Gastrocnemius medialis (tissue), 4 donors: ENCODE measurements at regions of chrX and their contacts with region 1.

Region 1: DNA sequence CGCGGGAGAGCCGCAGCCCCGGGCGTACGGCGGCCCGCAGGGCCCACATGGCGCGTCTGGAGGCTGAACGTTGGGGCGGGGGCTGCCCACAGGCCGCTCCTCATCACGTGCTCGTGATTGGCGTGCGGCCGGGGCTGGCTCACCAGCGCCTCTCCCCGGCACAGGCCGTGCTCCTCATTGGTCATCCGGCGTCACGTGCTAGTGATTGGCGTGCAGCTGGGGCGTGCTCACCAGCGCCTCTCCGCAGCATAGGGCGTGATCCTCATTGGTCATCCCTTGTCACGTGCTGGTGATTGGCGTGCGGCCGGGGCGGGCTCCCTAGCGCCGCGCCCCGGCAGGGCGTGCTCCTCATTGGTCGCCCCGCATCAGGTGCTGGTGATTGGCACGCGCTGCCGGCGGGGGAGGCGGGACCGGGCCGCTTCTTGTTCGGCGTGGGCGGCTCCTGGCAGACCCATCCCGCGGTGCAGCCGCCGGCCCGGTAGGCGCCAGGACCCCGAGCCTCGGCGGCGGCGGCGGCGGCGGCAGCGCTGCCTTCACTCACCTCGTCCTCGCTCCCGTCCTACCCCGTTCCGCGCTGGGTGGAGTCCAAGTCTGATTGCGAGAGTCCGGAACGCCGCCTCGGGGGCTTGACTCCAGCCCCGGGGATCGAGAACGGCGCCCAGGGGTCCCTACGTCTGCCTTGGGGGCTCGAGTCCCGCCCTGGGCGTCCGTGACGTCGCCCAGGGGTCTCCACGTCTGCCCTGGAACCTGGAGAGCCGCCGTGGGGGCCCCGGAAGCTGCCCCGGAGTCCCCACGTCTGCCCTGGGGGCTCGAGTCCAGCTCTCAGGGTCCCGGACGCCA is at the start of gene GTPBP6:
- DNase-seq: peak; percentile 100
- ATAC-seq: peak; percentile 75 to 83
- H3K4me3 ChIP-seq: peak within 1 kb of the TSS; percentile 88 to 94 (median 90)
- H3K27ac ChIP-seq: peak within 1 kb of the TSS; percentile 91 to 99 (median 99)
- H3K4me1 ChIP-seq: peaks cover 9 to 22% of the 10 kb centered on the region in 2 donors
- H3K27me3 ChIP-seq: peaks cover 0 to under 1% (median 0%) of the 10 kb centered on the region in 3 donors
- CTCF ChIP-seq: peak in 3 of 5 experiments; percentile 17 to 26 (median 21)
- POLR2A ChIP-seq: peak; percentile 65 to 82
- total RNA-seq, gene GTPBP6: 40.1 to 79.4 (median 46.9) TPM

Region 2: DNA sequence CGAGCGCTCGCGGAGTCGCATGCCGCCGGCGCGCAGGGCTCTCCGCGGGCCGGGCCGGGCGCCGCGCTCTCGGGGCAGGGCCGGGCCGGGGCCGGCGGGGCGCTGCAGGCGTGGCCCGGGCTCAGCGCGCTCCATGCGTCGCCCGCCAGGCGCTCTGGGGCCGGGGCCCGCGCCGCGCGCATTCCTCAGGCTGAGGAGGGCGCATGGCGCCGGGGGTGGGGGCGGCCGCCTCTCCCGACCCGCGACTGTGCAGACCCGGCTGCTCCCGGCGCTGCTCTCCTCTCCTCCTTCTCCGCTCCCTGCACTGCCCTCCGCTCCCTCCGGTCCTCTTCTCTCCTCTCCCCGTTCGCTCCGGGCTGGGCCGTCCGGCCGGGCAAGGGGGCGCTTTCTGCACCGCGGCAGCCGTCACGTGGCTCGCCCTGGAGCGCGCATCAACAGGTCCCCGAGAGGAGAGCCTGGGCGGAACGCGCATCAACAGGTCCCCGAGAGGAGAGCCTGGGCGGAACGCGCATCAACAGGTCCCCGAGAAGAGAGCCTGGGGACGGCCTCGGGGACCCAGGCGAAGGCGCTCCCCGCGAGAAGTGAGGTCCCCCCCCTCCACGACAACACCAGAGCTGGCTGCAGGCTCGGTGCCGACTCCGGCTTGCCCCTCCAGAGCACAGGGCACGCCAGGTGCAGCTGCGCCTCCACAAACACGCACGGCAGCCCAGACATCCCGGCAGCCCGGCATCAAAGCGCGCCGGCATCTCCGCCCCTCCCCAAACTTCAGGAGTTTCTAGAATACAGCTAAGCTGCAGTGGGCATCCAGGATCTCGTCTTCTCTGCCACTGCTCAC is 54.9 kb after region 1 on chrX:
- in situ Hi-C with region 1: no loop called
- intact Hi-C with region 1: loop called (anchors 2 kb)
- DNase-seq: peak; percentile 39 to 44
- ATAC-seq: peak; percentile 16 to 17
- H3K4me3 ChIP-seq: peak overlapping the region; percentile 65 to 69 (median 66)
- H3K27ac ChIP-seq: peak overlapping the region; percentile 89 to 98 (median 94)
- H3K4me1 ChIP-seq: peaks cover 29 to 30% of the 10 kb centered on the region in 2 donors
- H3K27me3 ChIP-seq: no peaks in the 10 kb centered on the region
- CTCF ChIP-seq: no peak
- POLR2A ChIP-seq: peak; percentile 39 to 48

Region 3: DNA sequence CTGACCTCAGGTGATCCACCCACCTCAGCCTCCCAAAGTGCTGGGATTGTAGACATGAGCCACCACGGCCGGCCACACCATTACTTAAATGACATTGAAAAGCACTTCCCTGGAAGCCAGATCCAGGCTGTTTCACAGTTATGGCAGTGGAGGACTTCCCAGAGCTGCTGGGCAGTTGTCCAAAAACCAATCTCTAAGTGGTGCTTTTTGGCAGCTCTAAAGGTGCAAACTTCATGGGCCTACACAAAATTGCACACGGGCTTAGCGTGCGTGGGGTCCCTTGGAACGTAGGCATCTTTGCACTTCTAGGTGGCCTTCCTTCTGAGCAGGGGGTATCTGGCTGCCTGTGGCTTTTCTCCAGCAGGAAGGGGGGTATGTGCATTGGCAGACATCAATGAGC is 483.9 kb after region 1 on chrX:
- in situ Hi-C with region 1: no loop called
- intact Hi-C with region 1: no loop called
- DNase-seq: no peak
- ATAC-seq: no peak
- H3K4me3 ChIP-seq: no peak overlapping the region
- H3K27ac ChIP-seq: no peak overlapping the region
- H3K4me1 ChIP-seq: no peaks in the 10 kb centered on the region
- H3K27me3 ChIP-seq: no peaks in the 10 kb centered on the region
- CTCF ChIP-seq: no peak
- POLR2A ChIP-seq: no peak